ENCODE measurements at regions of chr1 and their contacts with region 1.

Region 1: GRCh38 chr1:119968068-119968492 is 71.8 kb upstream of the ADAM30 start:
- DNase-seq: peak; percentile 47
- ATAC-seq: peak; percentile 99
- H3K4me3 ChIP-seq: no peak overlapping the region
- H3K27ac ChIP-seq: no peak overlapping the region
- H3K4me1 ChIP-seq: peaks cover 0 to 3% of the 10 kb centered on the region in 2 experiments; a peak in 1 of 4 replicates
- H3K27me3 ChIP-seq: no peaks in the 10 kb centered on the region
- CTCF ChIP-seq: peak; percentile 49 to 93 (median 87); a peak in 5 of 6 replicates
- POLR2A ChIP-seq: no peak
- RAD21 ChIP-seq: peak; percentile 43

Region 2: DNA sequence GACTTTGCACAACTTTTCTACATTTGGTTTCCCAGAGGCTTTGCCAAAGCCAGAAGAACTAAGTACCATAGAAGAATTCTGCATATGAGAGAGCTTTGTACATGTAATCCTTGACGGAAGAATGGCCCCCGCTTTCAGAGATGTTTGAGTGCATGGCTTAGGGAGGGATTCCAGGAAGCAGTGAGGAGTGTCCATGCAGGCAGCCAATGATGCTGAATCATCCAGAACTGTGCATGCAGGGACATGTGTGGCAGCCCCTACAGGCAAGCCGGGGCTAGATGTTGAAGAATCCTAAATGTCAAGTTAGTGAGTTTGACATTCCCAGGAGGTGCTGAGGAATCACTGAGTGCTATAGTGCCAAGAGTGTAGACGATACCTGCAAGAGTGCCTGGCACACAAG is 609.4 kb before region 1 on chr1:
- CTCF ChIA-PET with region 1: no interaction called
- POLR2A ChIA-PET with region 1: no interaction called
- RAD21 ChIA-PET with region 1: no interaction called
- intact Hi-C with region 1: no loop called
- DNase-seq: no peak
- ATAC-seq: peak; percentile 44; the same call in 1 of the 2 replicates
- H3K4me3 ChIP-seq: no peak overlapping the region
- H3K27ac ChIP-seq: no peak overlapping the region
- H3K4me1 ChIP-seq: no peaks in the 10 kb centered on the region
- H3K27me3 ChIP-seq: peaks cover 16% of the 10 kb centered on the region
- CTCF ChIP-seq: no peak
- POLR2A ChIP-seq: no peak
- RAD21 ChIP-seq: no peak

Region 3: DNA sequence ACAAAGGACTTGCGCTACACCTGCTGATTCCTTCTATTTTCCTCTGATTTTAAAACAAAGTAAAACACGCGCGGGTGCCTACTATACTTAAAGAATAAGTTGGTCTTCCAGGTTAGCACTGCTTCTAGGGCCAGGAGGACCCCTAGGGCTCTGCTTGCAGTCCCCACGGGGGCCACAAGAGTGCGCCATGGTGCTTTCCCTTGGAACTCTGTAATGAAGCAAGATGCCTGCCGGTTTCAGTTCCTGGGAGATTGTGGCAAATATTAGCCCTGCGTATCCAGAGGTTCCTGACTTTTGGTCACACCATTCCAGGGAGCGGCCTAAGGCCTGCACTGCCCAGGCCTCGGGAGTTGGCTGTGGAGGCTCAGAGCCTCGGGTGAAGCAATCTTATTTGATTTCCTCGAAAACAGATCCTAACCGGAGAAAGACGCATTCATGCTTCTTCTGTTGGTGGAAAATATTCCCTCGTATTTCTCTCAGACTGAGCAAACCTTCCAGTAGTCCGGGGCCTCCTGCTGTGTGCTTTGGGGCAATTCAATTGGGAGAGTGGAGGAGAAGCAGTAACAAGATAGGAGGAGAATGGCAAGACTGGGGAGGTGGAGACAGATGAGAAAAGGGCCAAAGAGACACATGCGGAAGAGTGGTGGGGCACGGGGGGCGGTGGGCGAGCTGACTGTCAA is 97.0 kb before region 1 on chr1:
- CTCF ChIA-PET with region 1: no interaction called
- POLR2A ChIA-PET with region 1: no interaction called
- RAD21 ChIA-PET with region 1: no interaction called
- intact Hi-C with region 1: loop called (anchors 1 kb)
- DNase-seq: peak; percentile 56
- ATAC-seq: peak; percentile 97
- H3K4me3 ChIP-seq: no peak overlapping the region
- H3K27ac ChIP-seq: no peak overlapping the region
- H3K4me1 ChIP-seq: peaks cover 0 to 4% of the 10 kb centered on the region in 2 experiments; a peak in 2 of 4 replicates
- H3K27me3 ChIP-seq: no peaks in the 10 kb centered on the region
- CTCF ChIP-seq: peak; percentile 68 to 98 (median 97)
- POLR2A ChIP-seq: no peak
- RAD21 ChIP-seq: peak; percentile 81

Region 4: DNA sequence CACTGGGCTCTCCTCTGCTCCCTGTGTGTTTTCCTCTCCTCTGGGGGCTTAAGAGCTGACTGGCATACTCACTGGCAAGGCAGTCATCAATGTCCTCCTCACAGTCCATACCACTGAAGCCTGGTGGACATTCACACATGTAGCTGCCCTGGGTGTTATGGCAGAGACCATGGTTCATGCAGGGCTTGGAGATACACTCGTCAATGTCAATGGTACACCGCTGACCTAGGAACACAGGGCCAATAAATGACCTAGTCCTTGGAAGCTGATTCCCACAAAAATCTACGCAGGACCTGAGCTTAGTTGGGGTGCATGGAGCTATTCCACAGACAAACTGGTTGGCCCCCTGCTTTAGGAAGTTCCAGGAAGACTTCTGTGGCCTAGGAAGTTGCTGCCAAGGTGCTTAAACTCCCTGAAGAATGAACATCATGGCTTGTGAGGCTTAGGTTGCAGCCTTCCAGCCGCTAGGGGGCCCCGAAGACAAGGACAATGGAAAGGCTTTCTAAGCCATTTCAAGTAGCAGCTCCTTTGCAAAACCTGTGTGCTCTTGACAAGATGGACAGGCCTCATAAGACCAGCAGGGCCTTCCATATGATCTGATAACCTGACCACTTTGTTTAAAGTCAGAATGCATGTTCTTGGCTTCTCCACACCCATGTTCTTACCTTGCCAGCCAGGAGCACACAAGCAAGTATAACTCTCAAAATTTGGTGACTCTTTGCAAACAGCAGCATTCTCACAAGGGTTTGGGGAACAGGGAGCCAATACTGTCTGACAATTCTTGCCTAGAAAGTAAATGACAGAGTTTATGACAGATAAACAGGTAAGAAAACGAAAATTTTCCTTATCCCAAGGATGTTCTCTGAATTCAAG is 19.5 kb before region 1 on chr1:
- CTCF ChIA-PET with region 1: interaction called, 4 read pairs
- POLR2A ChIA-PET with region 1: no interaction called
- RAD21 ChIA-PET with region 1: no interaction called
- intact Hi-C with region 1: loop called (anchors 2 kb)
- DNase-seq: peak; percentile 29
- ATAC-seq: peak; percentile 88
- H3K4me3 ChIP-seq: no peak overlapping the region
- H3K27ac ChIP-seq: no peak overlapping the region
- H3K4me1 ChIP-seq: no peaks in the 10 kb centered on the region
- H3K27me3 ChIP-seq: no peaks in the 10 kb centered on the region
- CTCF ChIP-seq: peak; percentile 45 to 94 (median 88); a peak in 5 of 6 replicates
- POLR2A ChIP-seq: no peak
- RAD21 ChIP-seq: peak; percentile 78